K562 (cell line): ENCODE measurements at regions of chr2 and their contacts with region 1.

Region 1: DNA sequence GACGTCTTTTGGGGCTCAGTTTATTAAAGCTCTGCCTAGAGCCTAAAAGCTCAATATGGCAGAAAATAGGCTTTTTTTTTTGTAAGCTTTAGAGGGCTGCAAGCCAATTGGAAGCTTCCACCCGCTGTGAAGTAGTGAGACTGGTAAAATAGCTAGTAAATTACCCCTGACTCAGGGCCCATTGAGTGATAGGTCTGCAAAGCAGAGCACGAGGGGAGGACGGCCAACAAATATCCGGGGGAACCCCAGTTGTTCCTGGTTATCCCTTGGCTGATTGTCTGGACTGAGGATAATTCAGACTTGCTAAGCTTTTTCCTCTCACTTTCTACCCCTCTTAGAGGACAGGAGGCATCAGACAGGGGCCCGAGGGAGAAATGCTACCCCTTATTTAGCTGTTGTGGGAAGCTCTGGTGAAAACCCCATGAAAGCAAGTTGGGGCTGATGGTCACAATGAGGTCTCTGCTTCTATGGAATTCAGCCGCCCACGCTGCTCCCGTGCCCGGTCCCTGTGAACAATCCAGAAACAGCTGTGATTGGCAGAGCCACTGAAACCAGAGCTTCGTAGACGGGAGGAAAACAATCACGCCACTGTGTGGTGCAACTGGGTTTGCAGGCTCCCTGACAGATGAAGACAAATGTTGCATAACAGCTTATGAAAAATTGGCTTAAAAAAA is 141.9 kb upstream of the LGALSL start:
- DNase-seq: peak in 2 of 4 experiments; percentile 32 to 33
- ATAC-seq: peak; percentile 82
- H3K4me3 ChIP-seq: no peak overlapping the region
- H3K27ac ChIP-seq: no peak overlapping the region
- H3K4me1 ChIP-seq: peaks cover 4 to 6% of the 10 kb centered on the region in 2 experiments; a peak in 3 of 5 replicates
- H3K27me3 ChIP-seq: peaks cover 26 to 59% of the 10 kb centered on the region in 2 experiments
- CTCF ChIP-seq: peak; percentile 31 to 52 (median 35); a peak in 4 of 6 replicates
- EP300 ChIP-seq: no peak
- POLR2A ChIP-seq: no peak
- RAD21 ChIP-seq: peak; percentile 57 to 68

Region 2: DNA sequence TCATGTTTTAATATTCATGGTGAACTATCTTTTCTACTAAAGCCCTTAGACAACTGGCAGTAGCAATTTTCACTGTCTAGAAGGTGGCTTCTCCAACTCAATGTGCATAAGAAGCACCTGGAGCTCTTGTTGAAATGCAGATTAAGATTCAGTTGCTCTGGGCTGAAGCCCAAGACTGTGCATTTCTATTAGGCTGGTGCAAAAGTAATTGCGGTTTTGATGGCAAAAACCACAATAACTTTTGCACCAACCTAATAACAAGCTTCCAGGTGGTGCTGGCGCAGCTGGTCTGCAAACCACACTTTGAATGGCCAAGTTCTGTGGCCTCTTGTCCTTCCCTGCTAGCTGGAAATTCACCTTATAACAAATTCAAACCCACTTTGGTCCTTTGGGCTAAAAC is 266.1 kb before region 1 on chr2:
- CTCF ChIA-PET with region 1: interaction called, 9 read pairs
- POLR2A ChIA-PET with region 1: no interaction called
- in situ Hi-C with region 1: no loop called
- intact Hi-C with region 1: loop called (anchors 5 kb)
- DNase-seq: no peak
- ATAC-seq: no peak
- H3K4me3 ChIP-seq: no peak overlapping the region
- H3K27ac ChIP-seq: no peak overlapping the region
- H3K4me1 ChIP-seq: no peaks in the 10 kb centered on the region
- H3K27me3 ChIP-seq: no peaks in the 10 kb centered on the region
- CTCF ChIP-seq: no peak
- EP300 ChIP-seq: no peak
- POLR2A ChIP-seq: no peak
- RAD21 ChIP-seq: no peak

Region 3: DNA sequence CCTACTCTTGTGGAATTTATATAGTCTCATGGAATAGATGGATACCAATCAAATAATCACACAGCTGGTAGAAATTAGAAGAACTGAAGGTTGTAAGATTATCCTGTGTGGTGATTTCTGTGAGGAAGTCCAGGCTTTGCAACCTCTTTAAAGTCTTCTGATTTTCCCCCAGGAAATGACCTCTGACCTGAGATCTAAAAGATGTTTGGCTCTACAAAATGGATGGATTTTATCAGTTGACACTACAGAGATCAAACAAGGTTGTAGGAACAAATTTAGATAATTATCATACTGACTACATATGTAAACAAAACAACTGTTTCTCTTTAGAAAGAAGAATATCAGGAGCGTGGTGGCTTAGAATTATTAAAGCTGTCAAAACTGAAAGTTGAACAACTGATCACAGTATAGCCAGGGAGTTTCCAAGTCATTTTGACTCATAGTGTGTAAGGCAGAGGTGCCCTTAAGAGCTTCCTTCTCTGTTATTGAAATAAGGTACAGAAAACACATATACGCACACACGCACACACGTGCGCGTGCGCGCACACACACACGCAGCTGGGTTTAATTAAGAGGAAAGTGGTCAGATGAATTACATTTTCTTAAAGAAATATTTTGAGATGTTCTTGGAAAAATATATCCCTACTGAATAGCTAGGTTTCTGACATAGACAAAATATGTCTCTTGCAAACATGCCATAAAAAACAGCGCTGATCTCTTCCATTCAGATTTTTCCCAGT is 132.3 kb before region 1 on chr2:
- CTCF ChIA-PET with region 1: no interaction called
- POLR2A ChIA-PET with region 1: no interaction called
- in situ Hi-C with region 1: no loop called
- intact Hi-C with region 1: loop called (anchors 10 kb)
- DNase-seq: no peak
- ATAC-seq: no peak
- H3K4me3 ChIP-seq: no peak overlapping the region
- H3K27ac ChIP-seq: no peak overlapping the region
- H3K4me1 ChIP-seq: no peaks in the 10 kb centered on the region
- H3K27me3 ChIP-seq: peaks cover 0 to 5% of the 10 kb centered on the region in 2 experiments; a peak in 2 of 5 replicates
- CTCF ChIP-seq: no peak
- EP300 ChIP-seq: no peak
- POLR2A ChIP-seq: no peak
- RAD21 ChIP-seq: no peak

Region 4: DNA sequence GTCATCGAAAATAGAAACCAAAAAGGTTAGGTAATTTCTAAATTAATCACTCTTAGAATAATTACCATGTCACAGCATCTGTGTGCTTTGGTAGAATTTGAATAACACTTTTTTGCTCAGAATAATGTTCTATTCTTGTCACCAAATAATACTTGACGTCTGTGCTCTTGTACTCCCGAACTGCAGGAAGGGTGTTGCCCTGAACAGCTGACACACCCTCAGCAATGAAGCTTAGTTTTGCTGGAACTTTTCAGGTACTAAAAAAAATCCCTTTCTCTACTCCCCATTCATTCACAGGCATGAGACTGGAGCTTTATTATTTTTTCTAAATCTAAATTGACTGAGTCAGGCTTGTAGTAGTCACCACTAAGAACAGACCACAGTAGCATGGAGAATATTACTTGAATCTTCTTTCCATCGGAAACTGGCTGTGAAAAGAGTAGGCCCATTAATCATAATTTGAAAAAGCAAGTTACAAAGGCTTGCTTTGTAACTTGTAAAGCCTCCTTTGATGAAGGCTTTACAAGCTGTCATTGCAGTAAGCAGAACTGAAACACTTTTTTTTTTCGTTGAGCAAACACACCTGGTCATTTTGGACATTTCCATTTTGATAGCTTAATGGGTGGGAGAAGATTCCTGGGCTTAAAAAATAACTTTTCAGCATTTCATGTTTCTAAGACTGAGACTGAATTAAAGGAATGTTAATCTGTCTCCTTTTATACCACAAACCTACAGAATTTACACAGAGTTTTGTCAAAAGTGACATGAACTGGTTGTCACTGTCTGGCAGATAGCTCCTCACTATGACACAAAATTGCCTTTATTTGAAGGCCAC is 97.6 kb before region 1 on chr2:
- CTCF ChIA-PET with region 1: no interaction called
- POLR2A ChIA-PET with region 1: no interaction called
- in situ Hi-C with region 1: no loop called
- intact Hi-C with region 1: loop called (anchors 10 kb)
- DNase-seq: peak in 2 of 4 experiments; percentile 22 to 47
- ATAC-seq: peak; percentile 71
- H3K4me3 ChIP-seq: no peak overlapping the region
- H3K27ac ChIP-seq: peak overlapping the region; percentile 89; the same call in 1 of the 3 replicates
- H3K4me1 ChIP-seq: peaks cover 0 to 31% of the 10 kb centered on the region in 2 experiments; a peak in 3 of 5 replicates
- H3K27me3 ChIP-seq: no peaks in the 10 kb centered on the region
- CTCF ChIP-seq: no peak
- EP300 ChIP-seq: no peak
- POLR2A ChIP-seq: no peak
- RAD21 ChIP-seq: no peak

Region 5: GRCh38 chr2:64516628-64517510 is 204.8 kb after region 1 on chr2:
- CTCF ChIA-PET with region 1: no interaction called
- POLR2A ChIA-PET with region 1: no interaction called
- in situ Hi-C with region 1: no loop called
- intact Hi-C with region 1: no loop called
- DNase-seq: no peak
- ATAC-seq: no peak
- H3K4me3 ChIP-seq: no peak overlapping the region
- H3K27ac ChIP-seq: no peak overlapping the region
- H3K4me1 ChIP-seq: no peaks in the 10 kb centered on the region
- H3K27me3 ChIP-seq: peaks cover 12 to 13% of the 10 kb centered on the region in 2 experiments
- CTCF ChIP-seq: no peak
- EP300 ChIP-seq: no peak
- POLR2A ChIP-seq: no peak
- RAD21 ChIP-seq: no peak